ENCODE measurements at regions of chr19 and their contacts with region 1.

Region 1: DNA sequence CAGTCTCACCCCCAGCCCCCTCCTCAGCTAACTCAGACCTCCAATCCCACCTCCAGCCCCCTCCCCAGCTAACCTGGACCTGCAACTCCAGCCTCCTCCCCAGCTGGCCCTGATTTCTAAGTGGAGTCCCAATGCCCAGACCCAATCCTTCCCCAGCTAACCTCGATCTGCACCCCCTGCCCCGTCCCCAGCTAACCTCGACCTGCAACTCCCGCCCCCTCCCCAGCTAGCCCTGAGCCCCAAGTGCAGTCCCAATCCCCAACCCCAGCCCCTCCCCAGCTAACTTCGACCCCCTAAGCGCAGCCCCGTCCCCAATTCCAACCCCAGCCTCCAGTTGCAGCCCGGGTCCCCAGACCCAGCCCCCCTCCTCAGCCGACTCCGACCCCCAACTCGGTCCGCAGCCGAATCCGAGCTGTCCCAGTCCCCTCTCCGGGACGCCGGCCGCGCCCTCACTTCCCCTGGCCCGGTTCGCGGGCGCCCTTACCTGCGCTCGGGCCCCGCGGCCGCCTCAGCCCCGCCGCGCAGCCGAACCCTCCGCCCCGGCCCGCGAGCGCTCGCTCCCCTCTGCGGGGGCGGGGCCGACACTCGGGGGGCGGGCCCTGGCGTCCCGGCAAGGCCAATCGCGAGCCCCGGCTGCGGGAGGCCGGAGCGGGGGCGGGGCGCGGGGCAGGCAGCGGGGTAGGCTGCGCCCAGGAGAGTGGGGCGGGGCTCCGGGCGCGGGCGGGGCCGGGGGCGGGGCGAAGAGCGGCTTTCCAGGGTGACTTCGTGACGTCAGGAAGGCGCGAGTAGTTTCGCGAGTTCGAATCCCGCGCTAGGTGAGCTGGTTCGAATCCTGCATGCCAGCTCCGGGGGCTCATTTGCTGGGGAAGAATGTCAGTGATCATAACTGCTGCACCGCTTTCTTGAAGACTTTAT is at the start of gene GNG7:
- DNase-seq: peak; percentile 99
- ATAC-seq: peak; percentile 100
- H3K4me3 Mint-ChIP-seq: peak within 1 kb of the TSS; percentile 60
- H3K27ac Mint-ChIP-seq: peak within 1 kb of the TSS; percentile 74
- H3K4me1 Mint-ChIP-seq: peaks cover 24% of the 10 kb centered on the region
- H3K27me3 Mint-ChIP-seq: no peaks in the 10 kb centered on the region
- total RNA-seq, gene GNG7: 1.1 to 1.2 TPM

Region 2: GRCh38 chr19:2427429-2428320 is 274.7 kb before region 1 on chr19 and contains the start of gene TIMM13:
- CTCF ChIA-PET with region 1: no interaction called
- POLR2A ChIA-PET with region 1: no interaction called
- intact Hi-C with region 1: loop called in 1 of 2 experiments (anchors 1 kb)
- DNase-seq: peak; percentile 98
- ATAC-seq: peak; percentile 95
- H3K4me3 Mint-ChIP-seq: peak within 1 kb of the TSS; percentile 86
- H3K27ac Mint-ChIP-seq: peak within 1 kb of the TSS; percentile 96
- H3K4me1 Mint-ChIP-seq: peaks cover 5% of the 10 kb centered on the region
- H3K27me3 Mint-ChIP-seq: no peaks in the 10 kb centered on the region
- total RNA-seq, gene TIMM13: 70.7 to 104 TPM

Region 3: GRCh38 chr19:2552859-2553258 is 149.6 kb before region 1 on chr19:
- CTCF ChIA-PET with region 1: no interaction called
- POLR2A ChIA-PET with region 1: no interaction called
- intact Hi-C with region 1: no loop called
- DNase-seq: peak; percentile 71
- ATAC-seq: peak; percentile 92
- H3K4me3 Mint-ChIP-seq: peak overlapping the region; percentile 50
- H3K27ac Mint-ChIP-seq: peak overlapping the region; percentile 78
- H3K4me1 Mint-ChIP-seq: peaks cover 13% of the 10 kb centered on the region
- H3K27me3 Mint-ChIP-seq: peaks cover 3% of the 10 kb centered on the region

Region 4: GRCh38 chr19:2739602-2740313 is 37.3 kb after region 1 on chr19 and contains the start of gene SLC39A3:
- CTCF ChIA-PET with region 1: no interaction called
- POLR2A ChIA-PET with region 1: no interaction called
- intact Hi-C with region 1: loop called in 1 of 2 experiments (anchors 1 kb)
- DNase-seq: peak; percentile 99
- ATAC-seq: peak; percentile 100
- H3K4me3 Mint-ChIP-seq: peak within 1 kb of the TSS; percentile 95
- H3K27ac Mint-ChIP-seq: peak within 1 kb of the TSS; percentile 70
- H3K4me1 Mint-ChIP-seq: peaks cover 14% of the 10 kb centered on the region
- H3K27me3 Mint-ChIP-seq: peaks cover 8% of the 10 kb centered on the region
- total RNA-seq, gene SLC39A3: 26.6 to 46.0 TPM

Region 5: DNA sequence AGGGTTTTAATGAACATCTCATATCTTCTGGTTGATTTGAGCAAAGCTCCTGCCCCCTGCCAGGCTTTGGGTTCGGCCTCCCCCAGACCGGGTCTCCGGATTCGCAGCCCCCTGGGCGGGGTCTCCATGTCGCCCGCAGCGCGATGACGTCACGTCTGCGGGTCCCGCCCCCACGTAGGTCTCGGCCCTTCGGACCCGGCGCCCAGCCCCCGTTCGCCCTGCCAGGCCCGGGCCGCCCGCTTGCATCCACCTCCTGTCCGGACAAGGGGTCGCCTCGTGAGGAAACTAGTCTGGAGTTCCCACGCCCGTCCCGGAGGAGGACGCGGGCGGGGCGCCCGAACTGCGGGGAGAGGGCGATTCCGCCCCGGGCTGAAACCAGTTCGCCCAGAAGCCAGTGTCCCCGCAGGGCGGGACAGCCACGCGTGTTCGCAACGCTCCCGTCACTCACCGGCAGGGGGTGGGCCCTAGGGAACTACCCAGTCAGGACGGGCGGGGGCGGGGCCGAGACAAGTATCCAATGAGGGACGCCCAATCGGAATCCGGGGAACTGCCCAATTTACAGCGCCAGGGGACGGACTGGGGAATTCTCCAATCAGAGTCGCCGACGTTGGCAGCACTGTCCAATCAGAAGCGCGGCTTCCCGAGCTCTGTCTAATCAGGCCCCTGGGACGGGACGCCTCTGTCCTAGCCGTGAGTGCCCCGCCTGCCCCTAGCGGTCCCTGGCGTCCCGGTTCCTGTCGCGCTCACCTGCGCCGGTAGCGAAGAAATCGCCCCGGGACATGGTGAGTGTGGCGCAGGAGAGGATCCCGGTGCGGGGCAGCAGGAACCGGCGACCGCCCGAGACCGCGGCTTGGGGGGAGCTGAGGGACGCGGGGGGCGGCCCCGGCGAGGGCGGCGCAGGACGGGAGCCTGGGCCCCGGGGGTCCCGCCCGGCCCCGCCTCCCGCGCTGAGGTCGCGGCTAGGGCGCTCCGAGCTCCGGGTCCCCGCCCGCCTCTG is 138.7 kb after region 1 on chr19 and contains the start of gene ZNF555:
- CTCF ChIA-PET with region 1: no interaction called
- POLR2A ChIA-PET with region 1: no interaction called
- intact Hi-C with region 1: loop called in 1 of 2 experiments (anchors 1 kb)
- DNase-seq: peak; percentile 99
- ATAC-seq: peak; percentile 100
- H3K4me3 Mint-ChIP-seq: peak within 1 kb of the TSS; percentile 77
- H3K27ac Mint-ChIP-seq: peak within 1 kb of the TSS; percentile 55
- H3K4me1 Mint-ChIP-seq: peaks cover 11% of the 10 kb centered on the region
- H3K27me3 Mint-ChIP-seq: no peaks in the 10 kb centered on the region
- total RNA-seq, gene ZNF555: 1.9 TPM

Region 6: GRCh38 chr19:2960120-2960519 is 257.7 kb after region 1 on chr19:
- CTCF ChIA-PET with region 1: no interaction called
- POLR2A ChIA-PET with region 1: no interaction called
- intact Hi-C with region 1: no loop called
- DNase-seq: no peak
- ATAC-seq: no peak
- H3K4me3 Mint-ChIP-seq: no peak overlapping the region
- H3K27ac Mint-ChIP-seq: no peak overlapping the region
- H3K4me1 Mint-ChIP-seq: peaks cover 5% of the 10 kb centered on the region
- H3K27me3 Mint-ChIP-seq: no peaks in the 10 kb centered on the region

Region 7: DNA sequence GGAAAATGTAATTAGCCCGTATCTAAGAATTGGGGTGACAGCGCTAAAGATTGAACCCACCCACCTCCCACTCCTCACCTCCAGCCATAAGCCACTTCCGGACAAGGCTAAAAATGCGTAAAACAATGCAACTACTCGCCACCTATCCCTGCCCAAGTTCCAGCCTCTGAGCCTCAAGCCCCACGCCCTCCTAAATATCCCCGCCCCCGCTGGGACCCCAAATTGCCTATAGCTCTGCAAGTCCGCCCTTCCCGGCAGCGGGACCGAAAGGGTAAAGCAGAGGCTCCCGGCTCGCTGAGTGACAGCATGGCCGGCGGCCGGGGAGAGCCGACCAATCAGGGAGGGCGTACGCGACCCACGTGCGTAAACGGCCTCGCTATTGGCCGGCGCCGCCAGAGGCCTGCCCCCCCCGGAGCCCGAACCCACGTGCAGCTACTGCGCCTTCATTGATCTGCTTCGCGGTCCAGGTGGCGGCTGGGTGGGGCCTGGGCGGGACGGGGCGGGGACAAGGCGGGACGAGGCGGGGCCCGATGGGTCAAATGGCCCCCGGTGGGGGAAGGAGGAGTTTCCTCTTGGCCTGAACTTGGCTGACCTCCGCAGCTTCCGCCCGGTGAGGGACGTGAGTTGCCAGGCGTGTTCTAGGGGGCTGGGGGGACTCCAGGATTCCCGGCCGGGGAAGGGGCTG is 274.7 kb after region 1 on chr19 and contains the start of gene TLE6:
- CTCF ChIA-PET with region 1: no interaction called
- POLR2A ChIA-PET with region 1: no interaction called
- intact Hi-C with region 1: loop called in 1 of 2 experiments (anchors 1 kb)
- DNase-seq: peak; percentile 98
- ATAC-seq: peak; percentile 100
- H3K4me3 Mint-ChIP-seq: peak within 1 kb of the TSS; percentile 77
- H3K27ac Mint-ChIP-seq: peak within 1 kb of the TSS; percentile 63
- H3K4me1 Mint-ChIP-seq: peaks cover 14% of the 10 kb centered on the region
- H3K27me3 Mint-ChIP-seq: peaks cover 4% of the 10 kb centered on the region
- total RNA-seq, gene TLE6: 2.6 to 3.5 TPM

Measured in activated CD4-positive, alpha-beta T cell treated with anti-CD3 and anti-CD28 coated beads for 36 hours (primary cell).